AG04450 (cell line): ENCODE measurements at regions of chr11 and their contacts with region 1.

Region 1: DNA sequence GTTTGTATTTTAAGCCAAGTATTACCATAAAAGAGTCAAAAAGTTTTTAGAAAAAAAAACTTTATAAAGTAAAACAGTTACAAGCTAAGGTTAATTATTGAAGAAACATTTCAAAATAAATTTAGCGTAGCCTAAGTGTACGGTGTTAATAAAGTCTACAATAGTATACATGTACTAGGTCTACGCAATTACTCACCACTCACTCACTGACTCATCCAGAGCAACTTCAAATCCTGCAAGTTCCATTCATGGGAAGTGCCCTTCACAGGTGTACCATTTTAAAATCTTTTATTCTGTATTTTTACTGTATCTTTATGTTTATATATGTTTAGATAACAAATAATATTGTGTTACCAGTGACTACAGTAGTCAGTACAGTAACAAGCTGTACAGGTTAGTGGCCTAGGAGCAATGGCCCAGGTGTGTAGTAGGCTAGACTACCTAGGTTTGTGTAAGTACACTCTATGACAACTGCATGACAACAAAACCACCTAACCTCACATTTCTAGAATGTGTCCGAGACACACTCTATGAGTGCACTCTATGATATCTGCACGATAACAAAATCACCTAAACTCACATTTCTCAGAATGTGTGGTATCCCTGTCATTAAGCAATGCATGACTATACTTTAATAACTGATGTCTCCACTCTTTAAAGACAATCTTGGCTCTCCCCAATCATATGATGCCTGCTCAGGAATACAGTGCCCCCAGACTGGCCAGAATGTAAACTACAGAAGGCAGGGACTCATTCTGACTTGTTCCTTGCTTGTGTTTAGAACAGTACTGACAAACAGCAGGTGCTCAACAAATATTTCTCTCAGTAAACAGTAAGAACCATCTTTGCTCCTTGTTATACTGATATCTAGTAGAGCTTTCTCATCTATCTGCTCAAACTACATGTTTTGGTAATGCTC is 21.2 kb downstream of the KMT5B start:
- DNase-seq: no peak
- H3K4me3 ChIP-seq: no peak overlapping the region
- H3K27ac ChIP-seq: no peak overlapping the region
- H3K27me3 ChIP-seq: no peaks in the 10 kb centered on the region
- CTCF ChIP-seq: no peak

Region 2: GRCh38 chr11:68051191-68052144 is 140.5 kb before region 1 on chr11:
- CTCF ChIA-PET with region 1: no interaction called
- POLR2A ChIA-PET with region 1: no interaction called
- DNase-seq: no peak
- H3K4me3 ChIP-seq: no peak overlapping the region
- H3K27ac ChIP-seq: no peak overlapping the region
- H3K27me3 ChIP-seq: no peaks in the 10 kb centered on the region
- CTCF ChIP-seq: no peak

Region 3: DNA sequence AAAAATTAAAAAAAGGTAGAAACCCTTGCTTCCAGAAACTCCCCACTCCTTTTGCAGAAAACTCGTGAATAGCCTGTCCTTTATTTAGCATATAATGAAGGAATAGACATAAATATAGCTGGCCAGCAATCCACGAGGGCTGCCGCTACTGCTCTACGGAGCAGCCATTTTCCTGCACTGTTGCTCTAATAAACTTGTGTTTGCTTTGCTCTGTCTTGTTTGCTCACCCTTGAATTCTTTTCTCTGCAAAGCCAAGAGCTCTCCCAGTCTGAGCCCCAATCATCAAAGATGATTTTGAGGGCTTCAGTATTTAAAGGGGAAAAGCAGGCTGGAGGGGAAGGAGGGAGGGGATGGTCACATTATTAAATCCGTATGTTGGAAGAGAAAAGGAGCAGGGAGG is 54.1 kb before region 1 on chr11:
- CTCF ChIA-PET with region 1: no interaction called
- POLR2A ChIA-PET with region 1: no interaction called
- DNase-seq: no peak
- H3K4me3 ChIP-seq: no peak overlapping the region
- H3K27ac ChIP-seq: no peak overlapping the region
- H3K27me3 ChIP-seq: no peaks in the 10 kb centered on the region
- CTCF ChIP-seq: no peak

Region 4: DNA sequence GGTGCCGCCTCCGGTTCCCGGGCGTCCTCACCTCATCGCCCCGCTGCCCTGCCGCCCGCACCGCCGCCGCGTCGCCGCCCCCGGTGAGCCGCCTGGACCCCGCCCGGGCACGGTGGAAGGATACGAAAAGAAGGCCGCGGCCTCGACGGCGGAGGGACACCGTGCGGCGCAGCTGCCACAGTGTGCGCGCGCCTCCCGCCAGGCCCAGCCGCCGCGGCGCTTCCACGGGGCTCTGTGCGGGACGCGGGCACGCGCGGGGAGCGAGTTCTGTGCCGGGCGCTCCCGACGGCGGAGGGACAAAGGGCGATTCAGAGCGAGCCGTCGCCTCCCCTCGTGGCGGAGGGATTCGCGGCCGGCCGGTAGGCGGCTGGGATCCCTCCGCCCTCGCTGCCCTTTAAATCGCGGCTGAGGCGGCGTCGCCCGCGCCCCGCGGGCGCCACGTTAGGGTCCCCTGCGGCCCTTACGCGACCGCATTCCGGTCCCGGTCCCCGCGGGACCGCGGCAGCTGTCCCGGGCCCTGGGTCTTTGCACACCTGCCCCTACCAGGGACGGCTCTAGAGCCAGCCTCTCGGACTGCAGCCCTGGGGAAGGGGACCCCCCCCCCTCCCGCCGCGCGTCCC is 21.7 kb after region 1 on chr11:
- CTCF ChIA-PET with region 1: interaction called, 19 read pairs
- POLR2A ChIA-PET with region 1: no interaction called
- DNase-seq: peak; percentile 94
- H3K4me3 ChIP-seq: peak overlapping the region; percentile 69
- H3K27ac ChIP-seq: peak overlapping the region; percentile 78
- H3K27me3 ChIP-seq: peaks cover 16% of the 10 kb centered on the region
- CTCF ChIP-seq: no peak; the same call in 1 of the 2 replicates

Region 5: DNA sequence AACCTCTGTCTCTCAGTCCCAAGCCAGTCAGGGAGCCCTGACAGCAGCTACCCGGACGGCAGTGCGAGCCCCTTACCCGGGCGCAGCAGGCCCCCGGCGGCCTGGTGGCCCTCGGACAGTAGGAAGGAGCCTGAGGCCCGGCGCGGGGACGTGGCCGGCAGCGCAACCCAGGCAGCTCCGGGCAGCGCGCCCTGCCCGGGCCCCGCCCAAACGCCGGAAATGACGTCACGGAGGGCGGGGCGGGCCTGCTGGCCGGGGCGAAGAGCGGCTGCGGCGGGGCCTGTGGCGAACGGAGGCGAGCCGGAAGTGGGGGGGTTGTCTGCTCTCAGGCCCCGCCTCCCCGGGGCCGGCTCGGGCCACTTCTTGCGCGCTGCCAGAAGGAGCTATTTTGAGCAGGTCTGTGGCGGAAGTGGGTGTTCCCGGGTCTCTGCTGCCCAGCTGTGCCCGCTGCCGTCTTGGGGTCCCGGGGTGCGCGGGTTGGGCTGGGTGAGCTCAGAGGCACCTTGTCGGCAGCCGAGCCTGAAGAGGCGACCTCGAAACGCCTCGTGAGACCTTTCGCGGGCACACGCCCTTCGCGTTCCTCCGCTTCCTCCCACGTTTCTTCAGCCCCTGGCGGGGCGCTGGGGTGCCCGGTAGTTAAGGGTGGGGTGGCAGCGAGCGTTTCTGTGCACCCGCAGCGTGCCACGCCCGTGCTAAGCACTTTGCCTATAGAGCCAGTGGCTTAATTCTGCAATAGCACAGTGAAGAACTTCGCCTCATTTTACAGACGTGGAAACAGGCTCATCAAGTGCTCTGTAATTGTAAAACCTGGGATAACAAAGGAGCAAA is 80.1 kb after region 1 on chr11 and contains the start of gene C11orf24:
- CTCF ChIA-PET with region 1: interaction called, 10 read pairs
- POLR2A ChIA-PET with region 1: no interaction called
- DNase-seq: peak; percentile 82
- H3K4me3 ChIP-seq: peak within 1 kb of the TSS; percentile 95
- H3K27ac ChIP-seq: peak within 1 kb of the TSS; percentile 98
- H3K27me3 ChIP-seq: no peaks in the 10 kb centered on the region
- CTCF ChIP-seq: no peak
- polyA plus RNA-seq, gene C11orf24: 39.1 and 58.9 TPM in 2 replicates